ENCODE measurements at regions of chr19 and their contacts with region 1.

Region 1: DNA sequence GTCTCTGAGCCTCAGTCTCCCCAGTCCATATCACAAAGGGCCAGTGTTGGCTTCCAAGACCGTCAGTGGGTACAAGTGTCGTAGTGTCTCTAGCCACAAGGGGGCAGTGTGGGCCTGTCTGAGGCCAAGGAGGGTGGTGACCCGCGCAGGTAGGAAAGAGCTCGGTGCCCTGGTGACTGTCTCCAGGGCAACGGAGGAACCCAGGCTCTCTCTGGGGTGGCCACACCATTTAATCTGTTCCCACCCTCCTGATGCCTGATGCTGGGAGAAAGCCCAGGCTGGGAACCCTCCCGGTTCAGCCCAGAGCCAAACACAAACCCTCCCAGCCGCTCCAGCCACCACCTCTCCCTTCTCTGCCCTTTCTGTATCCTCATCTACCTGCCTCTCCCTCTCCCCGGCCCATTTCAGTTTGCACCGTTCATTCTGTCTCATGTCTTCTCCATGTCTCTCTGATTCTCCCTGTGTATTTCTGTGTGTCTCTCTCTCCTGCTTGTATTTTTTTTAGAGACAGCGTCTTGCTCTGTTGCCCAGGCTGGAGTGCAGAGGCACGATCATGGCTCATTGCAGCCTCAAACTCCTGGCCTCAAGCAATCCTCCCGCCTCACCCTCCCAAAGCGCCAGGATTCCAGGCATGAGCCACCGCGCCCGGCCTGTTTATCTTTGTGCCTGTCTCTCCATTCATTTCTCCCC is 17.5 kb upstream of the MEIS3 start:
- DNase-seq: peak; percentile 90
- ATAC-seq: peak; percentile 90
- H3K4me3 Mint-ChIP-seq: no peak overlapping the region
- H3K27ac Mint-ChIP-seq: peak overlapping the region; percentile 66
- H3K4me1 Mint-ChIP-seq: peaks cover 8% of the 10 kb centered on the region
- H3K27me3 Mint-ChIP-seq: peaks cover 15% of the 10 kb centered on the region
- CTCF ChIP-seq: peak; percentile 92

Region 2: DNA sequence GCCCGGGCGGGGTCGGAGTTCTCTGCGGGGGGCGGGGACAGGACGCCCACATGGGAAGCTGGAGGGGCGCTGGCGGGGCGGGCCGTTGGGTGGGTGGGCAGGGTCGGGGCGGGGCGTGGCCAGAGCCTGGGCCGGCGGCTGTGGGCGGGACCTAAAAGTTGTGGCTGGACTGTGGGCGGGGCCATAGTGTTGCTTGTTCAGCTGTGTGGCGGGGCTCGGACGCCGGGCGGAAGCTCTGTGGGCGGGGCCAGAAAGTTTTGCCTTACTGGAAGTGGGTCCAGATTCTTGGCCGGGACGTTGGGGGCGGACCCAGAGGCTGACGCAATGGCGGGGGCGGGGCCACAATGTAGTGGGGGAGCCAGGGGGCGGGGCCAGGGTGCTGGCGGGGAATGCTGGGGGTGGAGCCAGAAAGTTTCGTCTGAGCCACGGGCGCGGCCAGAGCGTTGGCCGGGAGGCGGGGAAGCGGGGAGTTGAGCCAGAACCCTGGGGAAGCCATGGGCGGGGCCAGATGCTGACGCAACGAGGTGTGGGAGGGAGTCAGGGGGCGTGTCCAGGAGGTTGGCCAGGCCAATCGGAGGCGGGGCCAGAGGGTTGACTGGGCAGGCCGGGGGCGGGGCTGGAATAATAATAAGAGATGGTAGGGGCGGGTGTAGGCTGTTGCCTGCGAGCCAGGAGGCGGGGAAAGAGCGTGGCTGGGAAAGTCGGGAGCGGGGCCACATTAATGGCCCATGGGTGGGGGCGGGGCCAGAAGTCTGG is 180.0 kb before region 1 on chr19:
- CTCF ChIA-PET with region 1: interaction called, 10 read pairs
- POLR2A ChIA-PET with region 1: no interaction called
- DNase-seq: peak; percentile 100
- ATAC-seq: peak; percentile 86
- H3K4me3 Mint-ChIP-seq: peak overlapping the region; percentile 87
- H3K27ac Mint-ChIP-seq: peak overlapping the region; percentile 97
- H3K4me1 Mint-ChIP-seq: peaks cover 12% of the 10 kb centered on the region
- H3K27me3 Mint-ChIP-seq: peaks cover 19% of the 10 kb centered on the region
- CTCF ChIP-seq: no peak

Region 3: DNA sequence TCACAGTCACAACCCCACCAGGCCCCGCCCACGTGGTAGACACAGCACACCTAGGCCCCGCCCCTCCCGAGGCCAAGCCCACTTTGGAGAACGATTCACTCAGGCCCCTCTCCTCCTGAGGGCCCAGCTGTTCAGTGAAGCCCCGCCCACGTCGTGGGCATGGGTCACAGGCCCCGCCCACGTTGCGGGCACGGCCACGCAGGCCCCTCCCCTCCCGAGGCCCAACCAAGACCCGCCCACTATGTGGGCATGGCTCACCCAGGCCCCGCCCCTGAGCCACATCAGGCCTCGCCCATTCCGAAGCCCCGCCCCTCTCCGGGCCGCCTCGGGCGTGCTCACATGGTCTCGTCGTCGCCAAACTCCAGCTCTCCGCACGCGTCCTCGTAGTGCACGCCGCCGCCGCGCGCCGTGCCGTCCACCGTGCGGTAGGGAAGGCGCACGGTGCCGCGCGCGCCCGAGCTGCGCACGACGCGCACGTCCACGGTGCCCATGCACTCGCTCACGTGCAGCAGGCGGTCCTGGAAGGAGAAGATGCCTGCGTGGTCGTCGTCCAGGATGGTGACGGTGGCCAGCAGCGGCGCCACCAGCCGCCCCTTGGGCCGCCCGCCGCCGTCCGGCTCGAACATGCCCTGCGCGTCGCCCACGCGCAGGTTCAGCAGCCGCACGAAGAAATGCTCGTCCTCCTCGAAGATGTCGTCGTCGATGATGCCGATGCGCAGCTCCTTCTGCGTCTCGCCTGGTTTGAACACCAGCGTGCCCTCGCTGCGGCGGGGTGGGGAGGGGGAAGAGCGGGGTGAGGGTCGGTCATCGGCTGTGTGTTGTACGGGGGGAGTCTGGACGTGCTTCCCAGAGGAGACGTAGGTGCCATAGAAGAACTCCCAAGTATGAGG is 10.9 kb after region 1 on chr19:
- CTCF ChIA-PET with region 1: interaction called, 98 read pairs
- POLR2A ChIA-PET with region 1: interaction called, 3 read pairs
- DNase-seq: peak; percentile 99
- ATAC-seq: peak; percentile 89
- H3K4me3 Mint-ChIP-seq: peak overlapping the region; percentile 79
- H3K27ac Mint-ChIP-seq: peak overlapping the region; percentile 81
- H3K4me1 Mint-ChIP-seq: peaks cover 36% of the 10 kb centered on the region
- H3K27me3 Mint-ChIP-seq: peaks cover 56% of the 10 kb centered on the region
- CTCF ChIP-seq: no peak

Region 4: GRCh38 chr19:47471733-47472457 is 35.0 kb after region 1 on chr19 and contains the start of gene SLC8A2:
- CTCF ChIA-PET with region 1: interaction called, 20 read pairs
- POLR2A ChIA-PET with region 1: interaction called, 4 read pairs
- DNase-seq: peak; percentile 91
- ATAC-seq: peak; percentile 65
- H3K4me3 Mint-ChIP-seq: peak within 1 kb of the TSS; percentile 84
- H3K27ac Mint-ChIP-seq: peak within 1 kb of the TSS; percentile 16; the same call in 1 of the 2 replicates
- H3K4me1 Mint-ChIP-seq: peaks cover 34% of the 10 kb centered on the region
- H3K27me3 Mint-ChIP-seq: peaks cover 18% of the 10 kb centered on the region
- CTCF ChIP-seq: no peak
- total RNA-seq, gene SLC8A2: 6.5 to 8.5 TPM (median 6.8 TPM) in 3 replicates

Region 5: DNA sequence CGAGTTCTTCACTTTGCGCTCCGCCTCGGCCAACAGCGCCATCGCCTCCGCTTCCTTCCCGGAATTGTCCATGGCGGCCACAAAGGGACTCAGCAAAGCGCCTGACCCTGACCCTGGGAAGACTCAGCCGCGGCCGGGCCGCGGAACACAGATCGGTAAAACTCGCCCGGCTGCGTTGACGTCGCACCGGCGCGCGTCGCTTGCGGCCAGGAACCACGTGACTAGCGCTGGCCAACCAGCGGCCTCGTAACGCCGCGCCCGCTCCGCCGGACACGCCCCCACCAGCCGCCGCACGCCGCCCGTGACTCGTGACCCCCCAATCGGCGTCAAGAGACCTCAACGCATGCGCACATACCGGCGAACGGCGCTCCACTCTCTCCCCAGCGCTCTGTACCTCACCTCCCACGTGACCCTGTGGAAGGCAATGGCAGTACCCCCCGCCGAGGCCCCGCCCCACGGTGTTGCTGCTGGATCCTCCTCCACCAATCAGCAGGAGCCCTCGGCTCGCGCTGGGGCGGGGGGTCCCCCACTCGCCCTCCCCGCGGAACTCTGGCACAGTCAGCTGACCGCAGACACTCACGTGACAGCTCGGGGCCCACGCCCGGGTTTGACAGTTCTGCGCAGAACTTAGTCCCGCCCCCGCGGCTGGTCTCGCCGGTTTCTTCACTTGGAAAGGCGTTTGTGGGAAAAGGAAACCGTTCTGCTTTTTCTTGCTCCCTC is 78.2 kb after region 1 on chr19 and contains the start of gene NAPA:
- CTCF ChIA-PET with region 1: interaction called, 41 read pairs
- POLR2A ChIA-PET with region 1: no interaction called
- DNase-seq: peak; percentile 100
- ATAC-seq: peak; percentile 96
- H3K4me3 Mint-ChIP-seq: peak within 1 kb of the TSS; percentile 97
- H3K27ac Mint-ChIP-seq: peak within 1 kb of the TSS; percentile 96
- H3K4me1 Mint-ChIP-seq: peaks cover 30% of the 10 kb centered on the region
- H3K27me3 Mint-ChIP-seq: no peaks in the 10 kb centered on the region
- CTCF ChIP-seq: 0 out of 2 replicates have a peak, but pooled peaks have one; percentile 93
- total RNA-seq, gene NAPA: 58.4 to 66.8 TPM (median 61.3 TPM) in 3 replicates

Region 6: GRCh38 chr19:47675284-47675683 is 238.4 kb after region 1 on chr19:
- CTCF ChIA-PET with region 1: no interaction called
- POLR2A ChIA-PET with region 1: no interaction called
- DNase-seq: no peak
- ATAC-seq: no peak
- H3K4me3 Mint-ChIP-seq: no peak overlapping the region
- H3K27ac Mint-ChIP-seq: peak overlapping the region; percentile 50; the same call in 1 of the 2 replicates
- H3K4me1 Mint-ChIP-seq: no peaks in the 10 kb centered on the region
- H3K27me3 Mint-ChIP-seq: no peaks in the 10 kb centered on the region
- CTCF ChIP-seq: no peak

Region 7: GRCh38 chr19:47697863-47698609 is 261.2 kb after region 1 on chr19:
- CTCF ChIA-PET with region 1: interaction called, 24 read pairs
- POLR2A ChIA-PET with region 1: no interaction called
- DNase-seq: peak; percentile 86
- ATAC-seq: peak; percentile 84
- H3K4me3 Mint-ChIP-seq: no peak overlapping the region
- H3K27ac Mint-ChIP-seq: peak overlapping the region; percentile 91
- H3K4me1 Mint-ChIP-seq: 0 out of 2 replicates have a peak, but pooled peaks cover 2% of the 10 kb centered on the region
- H3K27me3 Mint-ChIP-seq: no peaks in the 10 kb centered on the region
- CTCF ChIP-seq: peak; percentile 93

Region 8: GRCh38 chr19:47713046-47714021 is 276.5 kb after region 1 on chr19 and contains the start of gene EHD2:
- CTCF ChIA-PET with region 1: interaction called, 70 read pairs
- POLR2A ChIA-PET with region 1: no interaction called
- DNase-seq: peak; percentile 72
- ATAC-seq: peak; percentile 81
- H3K4me3 Mint-ChIP-seq: peak within 1 kb of the TSS; percentile 66
- H3K27ac Mint-ChIP-seq: no peak within 1 kb of the TSS
- H3K4me1 Mint-ChIP-seq: 0 out of 2 replicates have a peak, but pooled peaks cover 7% of the 10 kb centered on the region
- H3K27me3 Mint-ChIP-seq: peaks cover 22% of the 10 kb centered on the region
- CTCF ChIP-seq: peak; percentile 97
- total RNA-seq, gene EHD2: 11.8 to 15.5 TPM (median 15.4 TPM) in 3 replicates

Measured in WTC11 (cell line).